Left cardiac atrium (tissue), 4 donors: ENCODE measurements at regions of chr11 and their contacts with region 1.

Region 1: GRCh38 chr11:8225589-8226036 is 38.1 kb downstream of the LMO1 start:
- DNase-seq: peak; percentile 73
- ATAC-seq: peak; percentile 68 to 74

Region 2: GRCh38 chr11:8263769-8264410 is 38.3 kb after region 1 on chr11 and contains the start of gene LMO1:
- intact Hi-C with region 1: loop called (anchors 2 to 5 kb)
- DNase-seq: peak; percentile 88
- ATAC-seq: peak; percentile 78 to 82
- total RNA-seq, gene LMO1: 0.18 TPM in 1 of 2 donors, not detected in the other

Region 3: DNA sequence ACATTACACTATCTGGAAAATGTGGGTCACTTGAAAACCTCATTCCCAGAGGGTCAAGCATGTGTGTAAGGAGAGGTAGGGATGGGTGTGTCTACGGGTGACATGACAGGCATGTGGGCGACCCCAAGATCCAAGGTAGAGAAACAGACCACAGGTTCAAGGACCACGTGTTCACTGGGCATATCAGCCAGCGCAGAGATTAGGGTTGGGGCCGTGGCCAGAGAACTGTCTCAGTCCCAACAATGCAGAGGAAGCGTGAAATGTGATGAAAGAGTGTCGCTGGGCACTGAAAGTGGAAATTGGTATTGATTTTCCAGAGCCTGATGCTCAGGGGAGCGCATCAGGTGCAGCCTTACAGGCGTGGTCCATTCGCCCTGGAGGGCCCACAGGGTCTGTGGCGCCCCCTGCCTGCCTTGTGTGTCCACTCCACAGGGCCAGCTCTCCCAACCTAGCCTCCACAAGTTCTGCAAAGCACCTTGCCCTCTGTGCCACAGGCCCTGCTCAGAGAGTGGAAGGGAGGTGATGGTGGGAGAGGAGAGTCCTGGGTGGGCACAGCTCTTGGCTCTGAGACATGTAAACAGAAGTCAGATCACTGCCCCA is 92.8 kb after region 1 on chr11:
- intact Hi-C with region 1: loop called (anchors 10 kb)
- DNase-seq: no peak
- ATAC-seq: no peak

Region 4: GRCh38 chr11:8328848-8329330 is 103.3 kb after region 1 on chr11:
- intact Hi-C with region 1: loop called in 1 of 2 experiments (anchors 10 kb)
- DNase-seq: peak; percentile 83
- ATAC-seq: peak; percentile 71 to 90

Region 5: GRCh38 chr11:8566613-8567210 is 341.1 kb after region 1 on chr11:
- intact Hi-C with region 1: loop called (anchors 1 to 5 kb)
- DNase-seq: no peak
- ATAC-seq: peak in 1 of 2 donors; percentile 52